A673 (cell line): ENCODE measurements at regions of chr10 and their contacts with region 1.

Region 1: DNA sequence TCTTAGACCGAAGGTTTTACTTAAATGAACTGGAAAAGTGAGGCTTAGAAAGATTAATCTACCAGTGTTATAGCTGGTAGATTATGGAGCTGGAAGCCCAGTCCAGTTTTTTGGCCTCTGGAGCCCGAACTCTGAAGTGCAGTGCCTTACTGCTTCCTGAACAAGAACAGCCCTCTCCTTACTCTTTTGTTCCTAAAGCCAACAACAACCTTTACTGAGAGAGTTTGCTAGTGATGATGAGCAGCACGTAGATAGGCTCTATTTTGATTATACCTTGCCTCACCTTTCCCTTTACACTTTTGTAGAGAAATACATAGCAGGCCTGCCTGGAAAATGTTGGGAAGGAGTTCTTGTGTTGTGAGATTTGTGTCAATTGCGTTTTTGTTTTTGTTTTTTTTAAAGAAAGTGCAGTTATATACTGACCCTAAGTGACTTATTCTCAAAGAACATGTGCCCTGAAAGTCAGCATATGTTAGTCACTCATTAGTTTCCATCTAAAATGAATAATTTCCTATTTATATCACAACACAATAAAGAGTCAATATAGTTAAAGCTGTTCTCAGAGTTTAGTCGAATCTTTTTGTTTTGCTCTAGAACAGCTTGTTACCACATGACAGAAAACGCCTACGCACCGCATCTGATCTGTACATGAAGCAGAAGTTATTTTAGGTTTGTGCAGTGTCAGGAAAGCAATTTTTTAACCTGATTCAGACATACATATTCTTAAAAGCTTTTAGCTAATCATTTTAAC is 33.0 kb downstream of the PLEKHA1 start:
- DNase-seq: no peak
- H3K4me3 ChIP-seq: no peak overlapping the region
- H3K27ac ChIP-seq: no peak overlapping the region
- H3K4me1 ChIP-seq: no peaks in the 10 kb centered on the region
- H3K27me3 ChIP-seq: no peaks in the 10 kb centered on the region
- CTCF ChIP-seq: no peak

Region 2: DNA sequence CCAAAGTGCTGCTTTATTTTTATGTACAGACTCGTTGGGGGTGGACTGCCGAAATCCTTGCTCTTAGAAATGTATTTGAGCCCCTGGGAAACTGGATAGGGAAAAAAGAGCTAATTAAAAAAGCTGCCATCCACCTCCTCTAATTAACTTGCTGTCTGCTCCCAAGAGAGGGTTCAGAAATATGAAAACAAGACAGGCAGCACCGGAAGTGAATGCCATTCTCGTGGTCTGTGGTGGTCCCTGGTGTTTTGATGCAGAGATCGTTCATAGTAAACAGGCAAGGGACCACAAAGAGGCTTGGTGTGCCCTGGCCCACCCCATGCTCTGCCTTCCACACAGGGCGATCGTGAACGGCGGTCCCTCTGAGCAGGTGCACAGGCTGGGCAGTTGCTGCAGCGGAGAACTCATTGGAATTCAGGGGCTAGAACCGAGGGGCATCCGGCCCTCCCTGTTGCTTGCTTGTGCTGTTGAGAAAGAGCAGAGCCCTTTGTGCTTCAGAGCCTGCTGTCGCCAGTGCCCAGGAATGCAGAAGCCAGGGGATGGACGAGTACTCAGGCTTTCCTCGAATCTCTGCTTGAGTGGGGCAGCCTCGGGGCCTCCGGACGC is 215.5 kb before region 1 on chr10:
- CTCF ChIA-PET with region 1: no interaction called
- POLR2A ChIA-PET with region 1: no interaction called
- intact Hi-C with region 1: no loop called
- DNase-seq: no peak
- H3K4me3 ChIP-seq: no peak overlapping the region
- H3K27ac ChIP-seq: no peak overlapping the region
- H3K4me1 ChIP-seq: no peaks in the 10 kb centered on the region
- H3K27me3 ChIP-seq: no peaks in the 10 kb centered on the region
- CTCF ChIP-seq: no peak

Region 3: GRCh38 chr10:122359621-122360020 is 47.9 kb before region 1 on chr10:
- CTCF ChIA-PET with region 1: no interaction called
- POLR2A ChIA-PET with region 1: interaction called, 12 read pairs
- intact Hi-C with region 1: no loop called
- DNase-seq: no peak
- H3K4me3 ChIP-seq: no peak overlapping the region
- H3K27ac ChIP-seq: no peak overlapping the region
- H3K4me1 ChIP-seq: no peaks in the 10 kb centered on the region
- H3K27me3 ChIP-seq: peaks cover under 1% of the 10 kb centered on the region
- CTCF ChIP-seq: no peak

Region 4: GRCh38 chr10:122557516-122557915 is 150.0 kb after region 1 on chr10:
- CTCF ChIA-PET with region 1: no interaction called
- POLR2A ChIA-PET with region 1: no interaction called
- intact Hi-C with region 1: no loop called
- DNase-seq: no peak
- H3K4me3 ChIP-seq: no peak overlapping the region
- H3K27ac ChIP-seq: no peak overlapping the region
- H3K4me1 ChIP-seq: no peaks in the 10 kb centered on the region
- H3K27me3 ChIP-seq: peaks cover 36% of the 10 kb centered on the region
- CTCF ChIP-seq: no peak

Region 5: GRCh38 chr10:122814493-122814892 is 406.9 kb after region 1 on chr10:
- CTCF ChIA-PET with region 1: no interaction called
- POLR2A ChIA-PET with region 1: no interaction called
- intact Hi-C with region 1: no loop called
- DNase-seq: no peak
- H3K4me3 ChIP-seq: no peak overlapping the region
- H3K27ac ChIP-seq: no peak overlapping the region
- H3K4me1 ChIP-seq: no peaks in the 10 kb centered on the region
- H3K27me3 ChIP-seq: peaks cover 63% of the 10 kb centered on the region
- CTCF ChIP-seq: no peak